ENCODE measurements at regions of chr1 and their contacts with region 1.

Region 1: DNA sequence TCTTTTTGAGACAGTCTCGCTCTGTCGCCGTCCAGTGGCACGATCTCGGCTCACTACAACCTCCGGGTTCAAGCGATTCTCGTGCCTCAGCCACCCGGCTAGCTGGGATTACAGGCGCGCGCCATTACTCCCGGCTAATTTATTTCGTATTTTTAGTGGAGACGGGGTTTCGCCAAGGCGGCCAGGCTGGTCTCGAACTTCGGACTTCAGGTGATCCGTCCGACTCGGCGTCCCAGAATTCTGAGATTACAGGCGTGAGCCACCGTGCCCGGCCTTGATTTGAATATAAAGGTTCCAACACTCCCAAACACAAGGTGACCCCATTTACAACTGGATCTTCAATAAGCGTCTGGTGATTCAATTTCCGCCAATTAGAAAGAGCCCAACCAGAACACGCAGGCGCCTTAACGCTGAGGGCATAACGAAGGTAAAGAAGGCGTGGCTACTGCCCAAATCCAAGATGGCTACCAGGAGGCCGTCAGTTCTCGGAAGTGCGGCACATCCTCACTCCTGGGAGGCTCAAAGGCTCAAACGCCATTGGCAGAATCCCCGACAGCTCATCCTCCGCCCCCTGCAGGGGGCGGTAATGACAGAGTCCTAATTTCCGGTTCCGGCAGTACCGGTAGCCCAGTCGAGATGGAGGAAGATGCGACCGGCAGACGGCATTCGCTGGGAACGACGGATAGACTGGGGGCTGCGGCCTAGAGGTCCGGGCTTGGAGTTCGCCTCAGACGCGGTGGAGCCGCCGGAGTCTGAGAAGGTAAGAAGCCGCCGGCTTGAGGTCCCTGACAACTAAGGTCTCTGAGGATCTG is at the start of gene SLC25A44:
- DNase-seq: peak; percentile 98
- ATAC-seq: peak; percentile 96
- H3K4me3 Mint-ChIP-seq: peak within 1 kb of the TSS; percentile 100
- H3K27ac Mint-ChIP-seq: peak within 1 kb of the TSS; percentile 97
- H3K4me1 Mint-ChIP-seq: peaks cover 43% of the 10 kb centered on the region
- H3K27me3 Mint-ChIP-seq: no peaks in the 10 kb centered on the region
- total RNA-seq, gene SLC25A44: 42.4 to 51.9 TPM

Region 2: GRCh38 chr1:156146020-156146768 is 47.5 kb before region 1 on chr1:
- CTCF ChIA-PET with region 1: interaction called, 3 read pairs
- POLR2A ChIA-PET with region 1: no interaction called
- intact Hi-C with region 1: loop called (anchors 2 kb)
- DNase-seq: peak; percentile 67
- ATAC-seq: peak; percentile 82
- H3K4me3 Mint-ChIP-seq: peak overlapping the region; percentile 37
- H3K27ac Mint-ChIP-seq: peak overlapping the region; percentile 85
- H3K4me1 Mint-ChIP-seq: peaks cover 46% of the 10 kb centered on the region
- H3K27me3 Mint-ChIP-seq: no peaks in the 10 kb centered on the region

Region 3: GRCh38 chr1:156160743-156161171 is 32.9 kb before region 1 on chr1:
- CTCF ChIA-PET with region 1: interaction called, 4 read pairs
- POLR2A ChIA-PET with region 1: interaction called, 4 read pairs
- intact Hi-C with region 1: loop called (anchors 1 to 2 kb)
- DNase-seq: peak; percentile 86
- ATAC-seq: peak; percentile 60
- H3K4me3 Mint-ChIP-seq: peak overlapping the region; percentile 68
- H3K27ac Mint-ChIP-seq: peak overlapping the region; percentile 88
- H3K4me1 Mint-ChIP-seq: peaks cover 84% of the 10 kb centered on the region
- H3K27me3 Mint-ChIP-seq: no peaks in the 10 kb centered on the region

Region 4: DNA sequence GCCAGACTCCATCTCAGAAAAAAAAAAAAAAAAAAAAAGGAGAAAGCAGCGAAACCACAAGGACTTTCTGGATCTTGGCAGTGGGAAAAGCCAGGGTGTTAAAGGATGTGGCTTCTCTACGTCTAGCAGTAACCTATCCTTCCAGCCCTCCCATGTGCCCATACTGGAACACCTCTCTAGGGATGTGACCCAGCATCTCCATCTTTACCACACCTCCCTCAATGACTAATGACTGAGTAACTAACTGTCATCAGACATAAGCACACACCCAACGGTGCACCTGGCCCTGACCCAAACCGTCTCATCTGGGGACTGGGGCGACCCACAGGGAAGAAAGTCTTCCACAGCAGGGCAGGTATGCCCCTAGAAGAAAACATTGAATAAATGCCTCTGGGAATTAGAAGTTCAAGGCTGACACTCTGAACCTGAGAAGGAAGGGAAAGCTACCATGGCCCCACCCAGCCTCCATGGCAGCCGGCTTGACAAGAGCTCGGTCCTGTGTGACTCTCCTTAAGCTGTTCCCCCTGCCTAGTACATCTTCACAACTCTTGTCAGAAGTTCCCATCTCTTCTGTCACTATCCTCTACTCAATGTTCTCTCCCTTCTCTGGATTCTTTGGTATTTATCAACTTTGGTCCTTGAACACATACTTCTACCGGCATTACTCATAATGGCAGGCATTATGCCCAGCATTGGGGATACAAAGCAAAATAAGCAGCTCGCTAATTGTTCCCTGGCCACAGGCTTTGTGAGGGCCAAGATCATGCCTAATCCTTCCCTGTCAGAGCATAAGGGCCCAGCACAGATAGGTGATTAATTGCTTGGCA is 69.0 kb after region 1 on chr1:
- CTCF ChIA-PET with region 1: no interaction called
- POLR2A ChIA-PET with region 1: no interaction called
- intact Hi-C with region 1: no loop called
- DNase-seq: no peak
- ATAC-seq: peak; percentile 83
- H3K4me3 Mint-ChIP-seq: no peak overlapping the region
- H3K27ac Mint-ChIP-seq: no peak overlapping the region
- H3K4me1 Mint-ChIP-seq: peaks cover 9% of the 10 kb centered on the region
- H3K27me3 Mint-ChIP-seq: no peaks in the 10 kb centered on the region